ENCODE measurements at regions of chr5 and their contacts with region 1.

Region 1: DNA sequence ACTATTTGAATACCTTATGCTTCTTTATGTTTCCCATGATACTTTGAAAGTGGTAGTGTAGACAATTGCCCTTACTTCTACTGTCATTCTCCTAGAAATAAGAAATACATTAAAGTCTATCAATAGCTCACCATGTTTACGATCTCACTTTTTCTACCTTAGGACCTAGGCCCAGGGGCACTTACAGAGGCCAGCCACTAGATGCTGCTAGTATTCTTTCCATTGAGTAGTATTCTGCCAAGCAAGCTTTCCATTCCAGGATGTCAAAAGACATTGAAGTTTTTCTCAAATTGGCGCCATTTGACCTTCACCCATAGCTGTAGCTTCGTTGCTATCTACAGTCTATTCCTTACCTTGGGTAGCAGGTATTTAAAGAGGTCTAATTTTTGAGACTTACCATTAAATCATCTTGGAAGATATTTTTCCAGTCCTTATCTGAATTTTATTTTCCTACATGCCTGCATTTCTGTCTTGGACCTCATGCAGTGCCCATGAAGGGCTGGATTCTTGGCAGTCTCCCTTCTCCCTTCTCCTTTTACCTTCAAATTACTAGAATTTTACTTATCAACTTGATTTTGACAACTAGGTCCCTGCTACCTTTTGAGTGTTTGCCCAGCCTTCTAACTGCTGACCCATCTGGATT is 246.0 kb upstream of the NUDT12 start:
- DNase-seq: no peak
- ATAC-seq: peak; percentile 84

Region 2: GRCh38 chr5:103708601-103709000 is 100.0 kb before region 1 on chr5:
- intact Hi-C with region 1: no loop called
- DNase-seq: no peak
- ATAC-seq: no peak

Region 3: DNA sequence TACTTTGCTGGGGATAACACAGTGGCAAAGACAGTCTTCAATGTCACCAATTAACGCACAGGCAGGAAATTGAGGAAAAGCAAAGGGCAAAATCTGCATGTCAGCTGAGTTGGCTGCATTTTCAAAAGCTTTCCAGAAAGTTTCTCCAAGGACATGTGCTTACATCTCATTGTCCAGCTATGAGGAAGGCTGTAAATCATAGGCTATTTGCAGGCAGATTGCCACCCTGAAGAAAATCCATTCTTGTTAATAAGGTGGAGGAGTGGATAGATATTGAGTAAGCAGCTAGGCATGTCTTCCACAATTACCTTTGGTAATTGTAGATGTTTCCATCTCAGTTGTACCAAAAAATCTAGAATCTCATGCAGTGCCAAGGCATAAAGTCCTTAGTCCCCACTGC is 32.0 kb after region 1 on chr5:
- intact Hi-C with region 1: loop called (anchors 1 kb)
- DNase-seq: no peak
- ATAC-seq: no peak